Activated T-helper 1 cell treated with anti-CD3 and anti-CD28 coated beads, Interleukin-12 subunit alpha, Interleukin-12 subunit beta, Interleukin-2, Interleukin-4 antibody, amounts not matched to agents 30 ng/mL and 10 ng/mL and 1 ng/mL, durations not matched to agents 14 hours and 24 hours and 36 hours (primary cell): ENCODE measurements at regions of chr15 and their contacts with region 1.

Region 1: DNA sequence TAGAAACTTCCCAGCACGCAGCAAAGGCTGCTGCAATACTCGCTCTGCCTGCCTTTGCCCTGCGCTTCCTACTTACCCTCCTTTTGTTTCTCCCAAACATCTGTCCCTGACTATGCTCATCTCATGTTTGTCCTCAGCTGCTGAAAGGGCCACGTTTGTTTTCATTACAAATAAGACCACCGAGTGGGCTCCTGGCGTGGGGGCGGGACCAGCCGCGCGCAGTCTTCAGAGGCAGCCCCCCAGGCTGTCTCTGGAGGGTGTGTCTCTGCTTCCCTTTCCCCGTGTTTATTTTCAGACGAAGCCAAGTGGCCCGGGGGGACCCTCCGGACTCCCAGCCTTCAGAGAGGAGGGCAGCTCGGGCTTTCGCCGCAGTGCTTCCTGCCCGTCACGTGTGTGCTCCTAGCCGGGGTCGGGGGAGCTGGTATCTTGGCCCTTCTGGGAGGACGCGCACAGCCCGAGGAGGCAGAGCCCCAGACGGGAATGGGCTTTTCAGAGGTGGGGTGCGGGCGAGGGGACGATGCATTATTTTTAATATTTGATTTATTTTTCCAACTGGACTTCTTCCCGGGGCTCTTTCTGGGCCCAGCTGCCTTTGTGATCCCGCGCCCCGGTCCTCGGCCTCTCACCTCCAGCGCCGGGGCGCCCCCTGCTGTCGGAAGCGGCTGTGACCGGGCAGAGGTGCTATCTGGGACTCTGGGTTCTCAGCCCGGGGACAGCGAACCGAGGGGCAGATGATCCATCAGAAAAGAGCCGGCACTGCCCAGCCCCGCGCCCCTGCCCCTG is 70.0 kb upstream of the CGNL1 start:
- DNase-seq: peak; percentile 75
- H3K4me3 Mint-ChIP-seq: peak overlapping the region; percentile 63
- H3K27ac Mint-ChIP-seq: no peak overlapping the region
- H3K4me1 Mint-ChIP-seq: peaks cover 4% of the 10 kb centered on the region
- H3K27me3 Mint-ChIP-seq: peaks cover 2% of the 10 kb centered on the region

Region 2: GRCh38 chr15:56496635-56497034 is 809.7 kb before region 1 on chr15:
- intact Hi-C with region 1: loop called (anchors 1 kb)
- DNase-seq: no peak
- H3K4me3 Mint-ChIP-seq: no peak overlapping the region
- H3K27ac Mint-ChIP-seq: no peak overlapping the region
- H3K4me1 Mint-ChIP-seq: peaks cover 6% of the 10 kb centered on the region
- H3K27me3 Mint-ChIP-seq: peaks cover 16% of the 10 kb centered on the region

Region 3: DNA sequence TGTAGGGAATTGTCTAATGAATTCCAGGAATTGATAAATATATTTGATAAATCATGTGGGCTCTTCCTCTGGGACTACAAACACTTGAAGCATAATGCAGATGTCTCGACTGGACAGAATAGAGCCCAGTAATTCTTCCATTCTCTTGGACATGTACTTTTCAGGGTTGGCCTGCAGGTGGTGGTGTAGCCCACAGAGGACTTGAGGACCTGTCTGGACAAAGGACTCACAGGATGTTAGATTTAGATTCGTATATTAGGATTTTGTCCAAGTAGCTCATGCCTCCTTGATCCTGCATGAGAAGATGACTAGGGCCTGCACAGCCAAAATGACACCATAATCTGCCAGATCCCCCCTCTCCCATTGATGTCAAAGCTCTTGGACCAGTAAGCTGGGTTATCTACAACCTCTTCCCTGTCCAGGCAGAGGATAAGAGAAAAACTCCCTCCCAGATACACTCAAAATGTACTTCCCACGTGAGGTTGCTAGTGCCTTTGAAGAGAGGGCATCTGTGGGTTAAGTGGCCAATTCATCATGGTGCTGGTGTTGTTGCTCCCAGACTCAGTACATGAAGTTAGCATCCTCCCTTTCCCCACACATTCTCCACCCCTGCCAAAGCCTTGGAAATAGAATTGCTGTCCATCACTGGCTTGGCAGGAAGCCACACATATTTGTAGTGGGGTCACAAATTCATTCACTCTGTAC is 484.5 kb before region 1 on chr15:
- intact Hi-C with region 1: loop called (anchors 1 kb)
- DNase-seq: peak; percentile 7
- H3K4me3 Mint-ChIP-seq: no peak overlapping the region
- H3K27ac Mint-ChIP-seq: no peak overlapping the region
- H3K4me1 Mint-ChIP-seq: peaks cover 7% of the 10 kb centered on the region
- H3K27me3 Mint-ChIP-seq: peaks cover 7% of the 10 kb centered on the region

Region 4: GRCh38 chr15:56886932-56887781 is 419.2 kb before region 1 on chr15:
- intact Hi-C with region 1: loop called (anchors 10 kb)
- DNase-seq: peak; percentile 76
- H3K4me3 Mint-ChIP-seq: peak overlapping the region; percentile 85
- H3K27ac Mint-ChIP-seq: peak overlapping the region; percentile 85
- H3K4me1 Mint-ChIP-seq: peaks cover 27% of the 10 kb centered on the region
- H3K27me3 Mint-ChIP-seq: peaks cover 4% of the 10 kb centered on the region

Region 5: DNA sequence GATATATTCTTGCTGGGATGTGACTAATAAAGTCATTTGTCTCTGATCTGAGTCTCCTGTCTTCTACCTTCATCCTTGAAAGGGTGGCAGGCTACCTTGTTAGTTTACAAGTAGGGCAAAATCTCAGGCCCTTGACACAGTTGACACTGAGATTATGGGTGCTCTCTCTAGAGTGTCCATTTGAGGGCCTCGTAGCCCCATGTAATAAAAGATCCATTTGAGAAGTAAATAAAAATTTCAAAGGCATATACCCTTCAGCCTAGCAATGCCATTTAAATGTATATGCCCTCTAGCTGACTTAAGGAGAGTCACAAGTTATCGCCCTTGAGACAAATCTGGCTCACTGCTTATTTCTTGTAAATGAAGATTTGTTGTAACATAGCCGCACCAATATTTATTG is 289.3 kb before region 1 on chr15:
- intact Hi-C with region 1: loop called (anchors 1 kb)
- DNase-seq: no peak
- H3K4me3 Mint-ChIP-seq: no peak overlapping the region
- H3K27ac Mint-ChIP-seq: no peak overlapping the region
- H3K4me1 Mint-ChIP-seq: peaks cover 8% of the 10 kb centered on the region
- H3K27me3 Mint-ChIP-seq: no peaks in the 10 kb centered on the region

Region 6: GRCh38 chr15:57146506-57147201 is 159.7 kb before region 1 on chr15:
- intact Hi-C with region 1: loop called (anchors 1 kb)
- DNase-seq: no peak
- H3K4me3 Mint-ChIP-seq: no peak overlapping the region
- H3K27ac Mint-ChIP-seq: no peak overlapping the region
- H3K4me1 Mint-ChIP-seq: peaks cover 11% of the 10 kb centered on the region
- H3K27me3 Mint-ChIP-seq: no peaks in the 10 kb centered on the region

Region 7: GRCh38 chr15:57220205-57220604 is 86.1 kb before region 1 on chr15:
- intact Hi-C with region 1: no loop called
- DNase-seq: no peak
- H3K4me3 Mint-ChIP-seq: no peak overlapping the region
- H3K27ac Mint-ChIP-seq: no peak overlapping the region
- H3K4me1 Mint-ChIP-seq: peaks cover 7% of the 10 kb centered on the region
- H3K27me3 Mint-ChIP-seq: no peaks in the 10 kb centered on the region

Region 8: DNA sequence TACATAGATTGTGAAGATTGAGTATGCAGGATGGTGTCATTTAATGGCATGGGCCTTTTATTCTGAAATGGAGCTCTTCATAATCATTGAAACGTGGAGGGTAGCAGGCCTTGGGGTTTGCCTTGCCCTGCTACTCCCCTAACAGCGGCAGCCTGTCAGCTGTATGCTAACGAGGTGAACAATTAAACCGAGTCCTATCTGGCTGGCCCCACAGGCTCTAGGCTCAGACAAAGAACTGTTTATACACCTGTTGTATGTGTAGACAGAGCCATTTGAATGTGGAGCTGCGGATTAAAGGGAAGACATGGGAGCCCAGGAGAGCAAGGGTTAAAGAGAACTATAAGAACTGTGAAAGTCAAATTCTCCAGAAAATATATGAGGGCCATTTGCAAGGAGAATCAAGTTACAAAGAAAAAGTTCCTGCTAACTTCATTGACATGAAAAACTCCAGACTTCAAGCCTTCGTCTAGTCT is 46.7 kb before region 1 on chr15:
- intact Hi-C with region 1: no loop called
- DNase-seq: no peak
- H3K4me3 Mint-ChIP-seq: no peak overlapping the region
- H3K27ac Mint-ChIP-seq: no peak overlapping the region
- H3K4me1 Mint-ChIP-seq: no peaks in the 10 kb centered on the region
- H3K27me3 Mint-ChIP-seq: no peaks in the 10 kb centered on the region